ENCODE measurements at regions of chr17 and their contacts with region 1.

Region 1: GRCh38 chr17:81484195-81484979 is 28.2 kb downstream of the ACTG1 start:
- DNase-seq: peak; percentile 88 to 90
- ATAC-seq: peak; percentile 48 to 76 (median 64)
- H3K4me3 ChIP-seq: peak overlapping the region in 9 of 10 donors; percentile 33 to 59 (median 54)
- H3K27ac ChIP-seq: peak overlapping the region in 5 of 10 donors; percentile 38 to 59 (median 52)
- H3K4me1 ChIP-seq: peaks cover 23 to 78% (median 61%) of the 10 kb centered on the region in 9 donors
- H3K27me3 ChIP-seq: peaks cover 0 to 40% (median 0%) of the 10 kb centered on the region in 7 donors
- CTCF ChIP-seq: peak in 8 of 9 donors; percentile 95 to 100 (median 99)

Region 2: GRCh38 chr17:81253358-81254131 is 230.8 kb before region 1 on chr17:
- intact Hi-C with region 1: loop called (anchors 1 to 5 kb)
- DNase-seq: peak in 1 of 2 donors; percentile 54
- ATAC-seq: peak in 5 of 8 donors; percentile 35 to 55 (median 46)
- H3K4me3 ChIP-seq: no peak overlapping the region
- H3K27ac ChIP-seq: no peak overlapping the region
- H3K4me1 ChIP-seq: peaks cover 4 to 24% (median 13%) of the 10 kb centered on the region in 9 donors
- H3K27me3 ChIP-seq: no peaks in the 10 kb centered on the region
- CTCF ChIP-seq: peak; percentile 67 to 86 (median 79)

Region 3: GRCh38 chr17:81401723-81402529 is 82.5 kb before region 1 on chr17:
- intact Hi-C with region 1: loop called in 8 of 10 experiments (anchors 1 to 10 kb)
- DNase-seq: peak in 1 of 2 donors; percentile 69
- ATAC-seq: peak in 6 of 8 donors; percentile 2 to 25 (median 6)
- H3K4me3 ChIP-seq: peak overlapping the region in 8 of 10 donors; percentile 19 to 94 (median 78)
- H3K27ac ChIP-seq: peak overlapping the region; percentile 3 to 99 (median 96)
- H3K4me1 ChIP-seq: peaks cover 45 to 90% (median 66%) of the 10 kb centered on the region in 9 donors
- H3K27me3 ChIP-seq: peaks cover 0 to 28% (median 0%) of the 10 kb centered on the region in 7 donors
- CTCF ChIP-seq: peak in 7 of 9 donors; percentile 14 to 50 (median 37)

Region 4: GRCh38 chr17:81419328-81419885 is 65.0 kb before region 1 on chr17:
- intact Hi-C with region 1: loop called in 2 of 10 experiments (anchors 5 to 10 kb)
- DNase-seq: peak; percentile 93 to 95
- ATAC-seq: peak; percentile 71 to 90 (median 86)
- H3K4me3 ChIP-seq: peak overlapping the region in 9 of 10 donors; percentile 2 to 50 (median 27)
- H3K27ac ChIP-seq: peak overlapping the region; percentile 44 to 99 (median 96)
- H3K4me1 ChIP-seq: peaks cover 56 to 77% (median 71%) of the 10 kb centered on the region in 9 donors
- H3K27me3 ChIP-seq: no peaks in the 10 kb centered on the region
- CTCF ChIP-seq: no peak

Region 5: DNA sequence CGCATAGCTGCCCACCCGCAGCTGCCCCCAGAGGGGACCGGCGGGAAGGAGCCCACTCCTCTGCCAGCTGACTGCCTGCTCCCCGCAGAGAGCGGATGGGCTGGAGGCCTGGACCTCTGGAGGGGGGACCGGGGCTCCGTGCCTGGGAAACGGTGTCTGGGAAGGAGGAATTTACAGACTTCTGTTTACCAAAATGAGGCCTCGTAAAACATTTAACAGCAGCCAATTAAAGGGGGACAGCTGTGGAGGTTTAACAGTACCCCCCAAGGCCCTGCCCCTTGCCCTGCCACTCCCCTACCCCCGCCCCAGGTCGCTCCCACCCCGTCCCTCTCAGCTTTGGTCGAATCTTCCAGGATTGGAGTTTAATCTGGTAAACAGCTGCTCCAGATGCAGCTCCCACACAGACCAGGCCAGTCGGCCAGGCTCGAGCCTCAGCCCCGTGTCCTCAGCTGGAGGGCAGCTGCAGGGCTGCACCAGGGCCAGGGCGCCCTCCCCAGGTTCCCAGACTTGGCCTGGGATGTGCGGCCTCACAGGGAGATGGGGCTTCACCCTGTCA is 48.0 kb before region 1 on chr17:
- intact Hi-C with region 1: loop called in 2 of 10 experiments (anchors 5 kb)
- DNase-seq: peak; percentile 69 to 76
- ATAC-seq: peak; percentile 41 to 84 (median 75)
- H3K4me3 ChIP-seq: no peak overlapping the region
- H3K27ac ChIP-seq: peak overlapping the region; percentile 60 to 91 (median 82)
- H3K4me1 ChIP-seq: peaks cover 5 to 56% (median 37%) of the 10 kb centered on the region in 9 donors
- H3K27me3 ChIP-seq: no peaks in the 10 kb centered on the region
- CTCF ChIP-seq: peak in 1 of 9 donors; percentile 18

Region 6: GRCh38 chr17:81470944-81471803 is 13.2 kb before region 1 on chr17:
- intact Hi-C with region 1: no loop called
- DNase-seq: no peak
- ATAC-seq: peak in 2 of 8 donors; percentile 13 to 49
- H3K4me3 ChIP-seq: no peak overlapping the region
- H3K27ac ChIP-seq: no peak overlapping the region
- H3K4me1 ChIP-seq: peaks cover 0 to 11% (median 0%) of the 10 kb centered on the region in 9 donors
- H3K27me3 ChIP-seq: no peaks in the 10 kb centered on the region
- CTCF ChIP-seq: no peak

Region 7: DNA sequence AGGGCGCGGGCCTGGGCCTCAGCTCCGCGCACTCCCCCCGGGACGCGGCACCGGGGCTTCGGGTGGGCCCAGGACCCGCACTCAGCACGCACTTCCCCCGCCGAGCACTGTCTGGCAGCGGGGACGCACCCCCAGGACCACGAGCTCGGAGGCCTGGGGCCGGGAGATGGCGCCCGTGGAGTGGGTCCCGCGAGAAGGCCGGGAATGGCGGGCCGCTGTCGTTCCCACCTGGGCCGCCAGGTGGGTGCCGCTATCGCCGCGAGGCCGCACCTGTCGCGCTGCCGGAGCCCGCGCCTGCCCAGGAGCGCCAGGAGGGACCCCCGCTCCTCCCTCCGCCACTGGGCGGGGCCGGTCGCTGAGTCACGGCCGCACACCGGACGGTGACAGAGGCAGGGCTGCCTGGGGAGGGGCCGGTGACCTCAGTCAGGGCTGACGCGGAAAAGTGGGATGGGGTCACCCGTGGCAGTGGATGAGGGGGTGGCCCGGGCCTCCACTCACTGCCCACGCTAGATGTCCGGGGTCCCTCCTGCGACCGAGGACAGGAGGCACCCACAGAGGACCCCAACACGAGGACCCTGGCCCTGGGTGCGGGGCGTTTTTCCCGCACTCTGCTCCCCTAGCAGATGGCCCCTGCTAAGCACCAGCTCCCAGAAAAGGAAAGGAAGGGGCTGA is 35.0 kb after region 1 on chr17:
- intact Hi-C with region 1: no loop called
- DNase-seq: peak in 1 of 2 donors; percentile 25
- ATAC-seq: peak in 2 of 8 donors; percentile 11 to 14
- H3K4me3 ChIP-seq: peak overlapping the region; percentile 33 to 62 (median 55)
- H3K27ac ChIP-seq: peak overlapping the region in 6 of 10 donors; percentile 13 to 100 (median 61)
- H3K4me1 ChIP-seq: peaks cover 22 to 58% (median 50%) of the 10 kb centered on the region in 9 donors
- H3K27me3 ChIP-seq: peaks cover 0 to 30% (median 18%) of the 10 kb centered on the region in 7 donors
- CTCF ChIP-seq: peak in 8 of 9 donors; percentile 9 to 55 (median 44)